ENCODE measurements at regions of chr4 and their contacts with region 1.

Region 1: DNA sequence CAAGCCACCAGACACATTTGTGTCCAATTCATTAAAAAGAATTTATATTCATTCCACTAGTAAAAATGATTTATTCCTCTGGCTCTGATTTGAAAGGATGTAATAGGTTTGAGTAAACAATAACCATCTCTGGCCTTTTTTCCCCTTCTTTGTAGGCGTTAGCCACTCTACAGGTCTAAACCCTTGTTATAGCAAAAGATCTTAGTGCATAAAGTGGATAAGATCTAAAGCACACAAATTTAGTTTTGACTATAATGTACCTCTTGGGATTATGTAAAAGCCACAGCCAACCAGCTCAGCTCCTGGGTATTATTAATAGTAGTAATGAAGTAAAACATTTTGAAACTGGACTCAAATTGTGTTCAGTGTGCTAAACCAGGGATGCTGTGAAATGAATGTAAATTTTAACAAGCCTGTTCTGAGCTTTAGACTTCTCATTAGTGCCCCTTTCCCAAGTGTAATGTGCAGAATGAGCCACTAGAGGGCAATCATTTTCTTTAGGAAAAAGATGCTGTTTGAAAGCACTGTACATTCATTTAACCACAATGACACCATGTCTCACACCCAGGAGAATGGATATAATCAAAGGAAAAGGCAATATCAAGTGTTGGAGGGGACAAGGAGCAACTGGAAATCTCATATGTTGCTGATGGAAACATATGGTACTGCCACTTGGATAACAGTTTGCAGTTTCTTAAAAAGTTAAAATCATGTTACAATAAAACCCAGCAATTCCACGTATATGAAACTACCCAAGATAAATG is 69.7 kb downstream of the KLHL8 start:
- DNase-seq: no peak

Region 2: DNA sequence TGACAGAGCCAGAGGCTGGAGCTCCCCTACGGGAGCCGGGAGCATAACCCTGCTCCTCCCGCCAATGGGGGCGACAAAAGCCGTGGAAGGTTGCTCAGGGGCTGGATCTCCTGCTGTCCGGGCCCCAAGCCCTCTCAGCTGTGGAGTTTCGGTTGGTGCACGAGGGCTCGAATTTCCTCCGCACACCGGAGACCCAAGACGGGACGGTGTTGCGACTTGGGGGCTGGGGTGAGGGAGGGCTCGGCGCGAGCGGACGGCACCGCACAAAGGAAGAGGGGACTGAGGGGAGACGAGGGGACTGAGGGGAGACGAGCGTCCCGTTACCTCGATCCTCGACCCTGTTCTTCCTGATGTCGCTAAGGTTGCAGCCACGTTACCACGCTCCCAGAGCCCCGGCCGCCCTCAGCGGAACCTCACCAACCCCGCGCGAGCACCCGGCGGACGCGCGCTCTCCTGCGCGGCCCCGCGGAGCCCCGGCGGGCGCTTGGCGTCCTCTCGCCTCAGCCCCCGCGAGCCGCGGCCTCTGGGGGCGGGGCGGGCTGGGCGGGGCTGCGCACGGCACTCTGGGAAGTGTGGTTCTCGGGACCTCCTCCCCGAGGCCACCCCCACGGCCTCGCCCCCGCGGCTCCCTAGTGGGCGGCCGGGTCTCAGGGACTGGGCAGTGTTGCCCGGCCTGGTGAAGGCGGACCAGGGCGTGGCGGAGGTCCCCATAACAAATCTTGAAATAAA is 69.6 kb after region 1 on chr4 and contains the start of gene KLHL8:
- intact Hi-C with region 1: loop called (anchors 5 kb)
- DNase-seq: peak; percentile 94
- total RNA-seq, gene KLHL8: 11.2 TPM

Region 3: DNA sequence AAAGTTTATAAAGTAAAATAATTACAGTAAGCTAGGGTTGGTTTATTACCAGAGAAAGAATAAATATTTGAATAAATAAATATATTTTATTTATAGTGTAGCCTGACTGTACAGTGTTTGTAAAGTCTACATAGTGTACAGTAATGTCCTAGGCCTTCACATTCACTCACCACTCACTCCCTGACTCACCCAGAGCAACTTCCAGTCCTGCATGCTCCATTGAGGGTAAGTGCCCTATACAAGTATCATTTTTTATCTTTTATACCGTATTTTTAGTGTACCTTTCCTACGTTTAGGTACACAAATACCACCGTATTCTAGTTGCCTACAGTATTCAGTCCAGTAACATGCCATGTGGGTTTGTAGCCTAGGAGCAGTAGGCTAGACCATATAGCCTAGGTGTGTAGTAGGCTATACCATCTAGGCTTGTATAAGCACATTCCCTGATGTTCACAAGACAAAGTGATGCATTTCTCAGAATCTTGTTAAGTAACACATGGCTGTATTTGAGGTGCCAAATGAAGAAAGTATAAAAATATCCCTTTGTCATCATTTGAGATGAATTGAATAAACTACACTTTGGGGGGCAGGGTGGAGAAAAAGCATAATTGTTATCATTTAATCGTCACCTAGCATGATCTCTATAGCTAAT is 84.5 kb after region 1 on chr4:
- intact Hi-C with region 1: loop called (anchors 1 kb)
- DNase-seq: no peak

Region 4: DNA sequence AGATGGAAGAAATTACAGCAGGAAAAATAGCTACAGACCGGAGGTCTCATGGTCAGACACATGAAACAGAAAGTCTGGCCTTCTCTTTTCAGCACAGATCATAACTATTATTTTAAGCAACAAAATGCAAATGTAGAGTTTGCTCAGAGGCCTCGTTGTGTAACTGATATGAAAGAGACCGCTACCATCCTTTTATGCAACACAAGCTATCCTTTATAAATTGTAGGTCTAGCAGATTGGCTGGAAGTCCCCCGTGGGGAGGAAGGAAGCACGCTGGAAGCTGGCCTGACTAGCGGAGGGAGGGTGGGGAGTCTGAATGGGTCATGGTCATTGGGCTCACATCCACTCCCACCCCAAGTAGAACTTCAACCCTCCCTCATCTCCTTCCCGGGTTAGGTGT is 527.1 kb after region 1 on chr4:
- intact Hi-C with region 1: no loop called
- DNase-seq: no peak